Endothelial cell of umbilical vein (primary cell): ENCODE measurements at regions of chr2 and their contacts with region 1.

Region 1: GRCh38 chr2:238513346-238513745 is 86.6 kb downstream of the ASB1 start:
- DNase-seq: peak; percentile 36
- H3K4me3 ChIP-seq: no peak overlapping the region
- H3K27ac ChIP-seq: no peak overlapping the region
- H3K4me1 ChIP-seq: no peaks in the 10 kb centered on the region
- H3K27me3 ChIP-seq: no peaks in the 10 kb centered on the region
- CTCF ChIP-seq: peak; percentile 59 to 64
- POLR2A ChIP-seq: no peak

Region 2: DNA sequence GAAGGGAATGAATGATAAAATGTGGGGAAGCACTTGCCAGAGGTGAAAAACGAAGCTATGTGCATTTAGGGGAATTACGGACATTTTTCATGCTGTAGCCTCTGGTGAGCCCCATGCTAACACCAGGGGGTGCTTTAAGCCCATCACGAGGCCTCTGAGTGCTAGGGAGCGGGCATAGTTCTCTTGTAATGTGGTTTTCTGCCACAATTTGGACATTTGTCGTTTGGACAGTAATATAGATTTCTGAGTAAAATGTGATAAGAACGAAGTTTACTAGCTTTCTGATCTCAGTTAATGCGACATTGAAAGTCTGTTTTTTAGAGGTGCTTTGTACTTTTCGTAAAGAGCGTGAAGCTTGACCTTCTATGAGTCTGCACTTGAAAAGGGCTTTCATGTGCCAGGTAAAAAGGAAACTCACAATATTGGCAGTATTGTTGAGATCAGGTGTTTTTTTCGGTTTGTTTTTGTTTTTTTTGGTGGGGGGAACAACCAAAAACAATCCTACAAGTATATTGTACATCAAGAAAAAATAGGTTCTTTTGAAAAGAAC is 142.4 kb before region 1 on chr2:
- CTCF ChIA-PET with region 1: interaction called, 11 read pairs
- POLR2A ChIA-PET with region 1: no interaction called
- dilution Hi-C with region 1: no loop called
- intact Hi-C with region 1: no loop called
- DNase-seq: peak; percentile 55
- H3K4me3 ChIP-seq: no peak overlapping the region
- H3K27ac ChIP-seq: no peak overlapping the region
- H3K4me1 ChIP-seq: no peaks in the 10 kb centered on the region
- H3K27me3 ChIP-seq: no peaks in the 10 kb centered on the region
- CTCF ChIP-seq: peak; percentile 77 to 78
- POLR2A ChIP-seq: no peak

Region 3: DNA sequence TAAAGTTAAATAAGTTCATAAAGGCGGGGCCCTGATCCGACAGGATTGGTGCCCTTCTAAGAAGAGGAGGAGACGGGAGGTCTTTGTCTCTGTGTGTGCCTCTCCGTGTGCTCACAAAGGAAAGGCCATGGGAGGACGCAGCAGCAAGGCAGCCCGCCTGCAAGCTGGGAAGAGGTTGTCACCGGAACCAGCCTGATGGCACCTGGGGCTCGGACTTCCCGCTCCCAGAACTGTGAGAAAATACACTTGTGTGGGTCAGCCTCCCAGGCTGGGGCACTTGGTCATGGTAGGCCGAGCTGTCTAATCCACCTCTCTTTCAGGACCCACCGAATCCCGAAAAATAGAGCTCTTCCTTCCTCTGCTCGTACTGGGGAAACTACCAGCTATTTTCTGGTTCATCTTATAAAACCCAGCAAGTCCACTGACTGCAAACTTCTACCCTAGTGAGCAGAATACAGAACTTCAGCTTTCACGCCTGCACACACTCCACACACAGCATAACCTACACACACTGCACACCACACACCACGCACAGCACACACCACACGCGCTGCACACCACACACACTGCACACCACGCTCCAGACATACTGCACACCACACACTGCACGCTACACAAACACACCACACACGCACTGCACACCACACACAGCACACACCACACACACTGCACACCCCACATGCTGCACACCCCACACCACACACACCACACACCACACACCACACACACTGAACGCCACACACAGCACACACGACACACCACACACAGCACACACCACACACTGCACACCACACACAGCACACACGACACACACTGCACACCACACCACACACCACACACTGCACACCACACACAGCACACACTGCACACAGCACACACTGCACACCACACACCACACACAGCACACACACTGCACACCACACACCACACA is 28.6 kb before region 1 on chr2:
- CTCF ChIA-PET with region 1: interaction called, 7 read pairs
- POLR2A ChIA-PET with region 1: no interaction called
- dilution Hi-C with region 1: no loop called
- intact Hi-C with region 1: loop called (anchors 1 kb)
- DNase-seq: no peak
- H3K4me3 ChIP-seq: no peak overlapping the region
- H3K27ac ChIP-seq: no peak overlapping the region
- H3K4me1 ChIP-seq: no peaks in the 10 kb centered on the region
- H3K27me3 ChIP-seq: no peaks in the 10 kb centered on the region
- CTCF ChIP-seq: no peak
- POLR2A ChIP-seq: no peak

Region 4: GRCh38 chr2:238523158-238524110 is 10.1 kb after region 1 on chr2:
- CTCF ChIA-PET with region 1: interaction called, 11 read pairs
- POLR2A ChIA-PET with region 1: no interaction called
- dilution Hi-C with region 1: no loop called
- intact Hi-C with region 1: no loop called
- DNase-seq: no peak
- H3K4me3 ChIP-seq: no peak overlapping the region
- H3K27ac ChIP-seq: no peak overlapping the region
- H3K4me1 ChIP-seq: no peaks in the 10 kb centered on the region
- H3K27me3 ChIP-seq: no peaks in the 10 kb centered on the region
- CTCF ChIP-seq: no peak
- POLR2A ChIP-seq: no peak

Region 5: DNA sequence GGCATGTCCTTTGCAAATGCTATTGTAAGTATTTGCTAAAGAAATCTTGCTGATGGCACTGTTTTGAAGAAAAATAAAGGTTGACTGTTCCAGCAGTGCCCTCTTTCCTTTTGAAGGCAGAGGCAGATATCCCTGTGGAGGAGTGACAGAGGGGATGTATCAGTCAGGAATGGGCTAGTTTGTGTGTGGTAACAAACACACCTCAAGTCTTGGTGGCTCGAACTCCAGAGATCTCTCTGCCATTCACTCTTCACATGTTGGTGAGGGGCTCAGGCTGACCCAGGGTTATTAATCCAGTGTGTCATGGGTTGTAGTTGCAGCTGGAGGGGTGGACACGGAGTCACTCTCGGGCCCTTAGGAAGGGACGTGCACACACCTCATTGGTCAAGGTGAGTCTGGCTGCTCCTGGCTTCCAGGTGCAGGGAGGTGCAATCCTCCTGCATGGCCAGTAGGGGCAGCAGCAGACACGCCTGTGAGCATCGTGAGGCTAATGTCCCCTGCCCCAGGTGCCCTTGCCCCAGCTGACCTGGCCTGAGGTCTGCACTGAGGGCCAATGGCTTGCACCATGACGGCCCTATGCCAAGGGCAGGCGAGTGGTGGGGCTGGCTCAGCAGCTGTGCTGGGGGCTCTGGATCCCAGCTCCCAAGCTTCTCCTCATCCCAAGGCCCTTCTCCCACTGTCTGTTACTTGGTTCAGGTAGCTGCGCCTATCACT is 59.9 kb after region 1 on chr2:
- CTCF ChIA-PET with region 1: interaction called, 5 read pairs
- POLR2A ChIA-PET with region 1: no interaction called
- dilution Hi-C with region 1: loop called (anchors 5 kb)
- intact Hi-C with region 1: no loop called
- DNase-seq: no peak
- H3K4me3 ChIP-seq: no peak overlapping the region
- H3K27ac ChIP-seq: no peak overlapping the region
- H3K4me1 ChIP-seq: no peaks in the 10 kb centered on the region
- H3K27me3 ChIP-seq: no peaks in the 10 kb centered on the region
- CTCF ChIP-seq: peak; percentile 60 to 77
- POLR2A ChIP-seq: no peak

Region 6: DNA sequence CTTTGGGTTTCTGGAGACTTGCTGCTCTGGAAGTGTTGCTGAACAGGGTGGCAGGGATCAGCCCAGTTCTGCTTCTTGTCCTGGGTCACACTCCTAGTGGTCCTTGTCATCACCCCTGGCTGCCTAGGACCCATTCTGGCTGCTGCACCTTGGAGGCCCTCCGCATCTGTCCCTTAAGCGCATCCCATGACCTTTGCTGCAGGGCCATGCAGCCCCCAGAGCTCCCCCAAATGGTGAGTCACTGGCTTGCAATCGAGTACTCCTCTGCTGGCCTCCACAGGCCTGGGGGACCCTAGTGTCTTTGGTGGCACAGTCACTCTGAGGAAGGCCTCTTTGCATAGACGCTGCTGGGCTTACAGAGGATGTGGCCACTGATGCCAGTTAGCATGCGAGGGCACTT is 101.8 kb after region 1 on chr2:
- CTCF ChIA-PET with region 1: interaction called, 29 read pairs
- POLR2A ChIA-PET with region 1: no interaction called
- dilution Hi-C with region 1: no loop called
- intact Hi-C with region 1: loop called (anchors 1 kb)
- DNase-seq: no peak
- H3K4me3 ChIP-seq: no peak overlapping the region
- H3K27ac ChIP-seq: no peak overlapping the region
- H3K4me1 ChIP-seq: no peaks in the 10 kb centered on the region
- H3K27me3 ChIP-seq: peaks cover 0 to 2% of the 10 kb centered on the region in 2 experiments
- CTCF ChIP-seq: no peak
- POLR2A ChIP-seq: no peak

Region 7: GRCh38 chr2:238875101-238875470 is 361.7 kb after region 1 on chr2:
- CTCF ChIA-PET with region 1: interaction called, 11 read pairs
- POLR2A ChIA-PET with region 1: no interaction called
- dilution Hi-C with region 1: no loop called
- intact Hi-C with region 1: no loop called
- DNase-seq: no peak
- H3K4me3 ChIP-seq: no peak overlapping the region
- H3K27ac ChIP-seq: no peak overlapping the region
- H3K4me1 ChIP-seq: no peaks in the 10 kb centered on the region
- H3K27me3 ChIP-seq: no peaks in the 10 kb centered on the region
- CTCF ChIP-seq: no peak
- POLR2A ChIP-seq: no peak